CD8-positive, alpha-beta memory T cell (primary cell): ENCODE measurements at regions of chr18 and their contacts with region 1.

Region 1: DNA sequence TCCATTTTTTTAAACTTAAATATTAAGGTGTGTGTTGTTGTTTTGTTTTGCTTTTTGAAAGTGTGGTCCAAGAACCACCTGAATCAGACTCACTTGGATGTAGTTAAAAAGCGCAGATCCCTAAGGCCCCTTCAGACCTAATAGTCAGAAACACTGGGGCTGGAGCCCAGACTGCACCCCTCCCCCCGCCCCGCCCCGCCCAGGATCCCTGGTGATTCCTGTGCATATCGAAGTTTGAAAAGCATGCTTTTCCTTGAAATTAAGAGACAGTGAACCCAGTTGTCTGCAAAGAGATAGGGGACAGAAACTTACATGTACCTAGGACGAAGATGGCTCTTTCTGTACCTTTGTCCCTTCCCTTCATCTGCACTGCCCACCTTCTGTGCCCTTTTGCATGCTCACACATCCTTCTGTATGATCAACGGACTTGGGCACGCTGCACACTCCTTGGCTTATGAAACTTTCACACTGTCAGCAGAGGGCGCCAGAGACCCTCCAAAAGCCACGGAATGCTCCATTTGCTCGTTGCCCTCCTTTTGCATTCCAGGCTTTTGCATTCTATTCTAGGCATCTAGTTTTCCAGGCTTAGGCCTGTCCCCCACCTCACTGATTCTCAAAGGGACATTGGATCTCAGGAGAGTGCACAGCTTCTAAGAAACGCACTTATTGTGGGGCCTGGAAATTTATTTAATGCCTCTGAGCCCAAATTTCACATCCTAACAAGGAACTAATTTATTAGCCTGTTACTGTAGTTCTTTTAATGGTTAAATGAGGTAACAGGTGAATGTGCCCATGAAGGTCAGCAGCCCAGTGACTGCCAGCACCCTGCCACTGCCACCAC is 32.8 kb upstream of the SLC14A1 start:
- DNase-seq: peak; percentile 63 to 81 (median 66)
- H3K4me3 ChIP-seq: no peak overlapping the region
- H3K4me3 Mint-ChIP-seq: peak overlapping the region in 6 of 7 donors; percentile 14 to 75 (median 48)
- H3K27ac ChIP-seq: no peak overlapping the region
- H3K27ac Mint-ChIP-seq: peak overlapping the region in 4 of 8 donors; percentile 57 to 89 (median 69)
- H3K4me1 ChIP-seq: peaks cover 47% of the 10 kb centered on the region
- H3K4me1 Mint-ChIP-seq: peaks cover 38 to 50% (median 49%) of the 10 kb centered on the region in 3 donors
- H3K27me3 ChIP-seq: no peaks in the 10 kb centered on the region
- H3K27me3 Mint-ChIP-seq: no peaks in the 10 kb centered on the region

Region 2: GRCh38 chr18:45670281-45670962 is 20.8 kb before region 1 on chr18:
- CTCF ChIA-PET with region 1: interaction called, 230 read pairs
- POLR2A ChIA-PET with region 1: interaction called, 53 read pairs
- DNase-seq: peak in 3 of 5 donors; percentile 27 to 74 (median 33)
- H3K4me3 ChIP-seq: no peak overlapping the region
- H3K4me3 Mint-ChIP-seq: peak overlapping the region in 4 of 7 donors; percentile 41 to 79 (median 64)
- H3K27ac ChIP-seq: no peak overlapping the region
- H3K27ac Mint-ChIP-seq: peak overlapping the region; percentile 44 to 94 (median 87)
- H3K4me1 ChIP-seq: peaks cover 48% of the 10 kb centered on the region
- H3K4me1 Mint-ChIP-seq: peaks cover 46 to 62% (median 54%) of the 10 kb centered on the region in 3 donors
- H3K27me3 ChIP-seq: no peaks in the 10 kb centered on the region
- H3K27me3 Mint-ChIP-seq: peaks cover 0 to 4% of the 10 kb centered on the region in 2 donors

Region 3: DNA sequence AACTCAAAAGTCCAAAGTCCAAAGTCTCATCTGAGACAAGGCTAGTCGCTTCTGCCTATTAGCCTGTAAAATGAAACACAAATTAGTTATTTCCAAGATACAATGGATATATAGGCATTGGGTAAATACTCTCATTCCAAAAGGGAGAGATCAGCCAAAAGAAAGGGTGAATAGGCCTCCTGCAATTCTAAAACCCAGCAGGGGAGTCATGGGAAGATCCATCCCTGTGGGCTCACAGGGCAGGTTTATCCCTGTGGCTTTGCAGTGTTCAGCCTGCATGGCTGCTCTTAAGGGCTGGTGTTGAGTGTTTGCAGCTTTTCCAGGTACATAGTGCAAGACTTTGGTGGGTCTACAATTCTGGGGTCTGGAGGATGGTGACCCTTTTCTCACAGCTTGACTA is 11.7 kb after region 1 on chr18:
- CTCF ChIA-PET with region 1: no interaction called
- POLR2A ChIA-PET with region 1: no interaction called
- DNase-seq: no peak
- H3K4me3 ChIP-seq: no peak overlapping the region
- H3K4me3 Mint-ChIP-seq: no peak overlapping the region
- H3K27ac ChIP-seq: no peak overlapping the region
- H3K27ac Mint-ChIP-seq: no peak overlapping the region
- H3K4me1 ChIP-seq: no peaks in the 10 kb centered on the region
- H3K4me1 Mint-ChIP-seq: no peaks in the 10 kb centered on the region
- H3K27me3 ChIP-seq: no peaks in the 10 kb centered on the region
- H3K27me3 Mint-ChIP-seq: no peaks in the 10 kb centered on the region